Adrenal gland (tissue), 19 donors: ENCODE measurements at regions of chr20 and their contacts with region 1.

Region 1: GRCh38 chr20:57526087-57526884 is 1.3 kb upstream of the CTCFL start:
- DNase-seq: no peak
- H3K4me3 ChIP-seq: no peak overlapping the region
- H3K27ac ChIP-seq: no peak overlapping the region
- H3K4me1 ChIP-seq: no peaks in the 10 kb centered on the region
- H3K27me3 ChIP-seq: no peaks in the 10 kb centered on the region
- CTCF ChIP-seq: no peak
- POLR2A ChIP-seq: no peak

Region 2: DNA sequence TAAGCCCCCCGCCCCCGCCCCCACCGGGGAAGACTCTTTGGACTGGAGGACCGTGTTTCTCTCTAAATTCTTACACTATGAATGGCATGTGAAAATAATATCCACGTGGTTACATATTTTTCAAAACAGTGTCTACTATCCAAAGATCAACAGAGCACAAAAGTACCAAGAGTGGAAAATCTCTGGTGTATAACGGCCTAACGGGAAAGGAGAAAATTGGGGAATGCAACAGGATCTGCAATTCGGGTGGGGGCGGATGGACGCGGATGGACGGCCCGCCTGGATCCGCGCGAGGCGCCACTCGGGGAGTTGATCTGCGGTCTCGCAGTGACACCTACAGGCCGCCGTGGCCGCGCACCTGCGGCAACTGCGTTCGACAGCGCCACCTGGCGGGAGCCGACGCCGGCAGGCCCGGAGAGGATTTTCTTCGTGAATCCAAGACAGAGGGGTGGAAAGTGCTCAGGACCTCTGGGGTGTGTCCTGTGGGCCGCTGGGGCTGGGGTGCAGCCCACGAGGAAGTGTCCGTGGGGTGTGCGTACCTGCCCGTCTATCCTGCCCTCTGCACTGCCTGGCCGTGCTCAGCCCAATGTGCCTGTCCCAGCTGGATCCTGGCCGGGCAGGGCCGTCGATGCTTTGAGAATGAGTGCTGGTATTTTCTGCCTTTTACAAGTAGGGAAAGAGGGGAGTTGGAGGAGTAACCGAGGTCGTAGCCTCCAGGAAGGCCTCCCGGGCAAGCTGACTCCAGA is 683.5 kb after region 1 on chr20:
- intact Hi-C with region 1: loop called (anchors 5 to 10 kb)
- DNase-seq: peak; percentile 63 to 91 (median 84)
- H3K4me3 ChIP-seq: no peak overlapping the region
- H3K27ac ChIP-seq: no peak overlapping the region
- H3K4me1 ChIP-seq: no peaks in the 10 kb centered on the region
- H3K27me3 ChIP-seq: no peaks in the 10 kb centered on the region
- CTCF ChIP-seq: peak; percentile 100
- POLR2A ChIP-seq: no peak